ENCODE measurements at regions of chr19 and their contacts with region 1.

Region 1: GRCh38 chr19:37906869-37907734 is at the start of gene SIPA1L3:
- DNase-seq: peak; percentile 96 to 97 (median 97)
- ATAC-seq: peak; percentile 97 to 98 (median 98)
- H3K4me3 ChIP-seq: peak within 1 kb of the TSS; percentile 92 to 97 (median 96)
- H3K27ac ChIP-seq: peak within 1 kb of the TSS in 2 of 3 donors; percentile 32 to 41
- H3K4me1 ChIP-seq: peaks cover 0 to 9% (median 3%) of the 10 kb centered on the region in 4 donors
- H3K27me3 ChIP-seq: no peaks in the 10 kb centered on the region
- CTCF ChIP-seq: no peak
- POLR2A ChIP-seq: peak; percentile 83
- total RNA-seq, gene SIPA1L3: 9.1 to 20.4 (median 14.9) TPM

Region 2: GRCh38 chr19:38079926-38080380 is 172.9 kb after region 1 on chr19:
- intact Hi-C with region 1: loop called in 1 of 2 experiments (anchors 10 kb)
- DNase-seq: no peak
- ATAC-seq: peak; percentile 64 to 97 (median 71)
- H3K4me3 ChIP-seq: no peak overlapping the region
- H3K27ac ChIP-seq: no peak overlapping the region
- H3K4me1 ChIP-seq: no peaks in the 10 kb centered on the region
- H3K27me3 ChIP-seq: no peaks in the 10 kb centered on the region
- CTCF ChIP-seq: no peak
- POLR2A ChIP-seq: no peak

Region 3: GRCh38 chr19:38095411-38096308 is 188.6 kb after region 1 on chr19:
- intact Hi-C with region 1: loop called in 1 of 2 experiments (anchors 10 kb)
- DNase-seq: peak in 2 of 3 donors; percentile 57 to 59
- ATAC-seq: peak; percentile 72 to 84 (median 78)
- H3K4me3 ChIP-seq: no peak overlapping the region
- H3K27ac ChIP-seq: no peak overlapping the region
- H3K4me1 ChIP-seq: no peaks in the 10 kb centered on the region
- H3K27me3 ChIP-seq: no peaks in the 10 kb centered on the region
- CTCF ChIP-seq: peak; percentile 43 to 72 (median 61)
- POLR2A ChIP-seq: no peak